ENCODE measurements at regions of chr18 and their contacts with region 1.

Region 1: GRCh38 chr18:34122724-34123334 is 101.9 kb downstream of the NOL4 start:
- DNase-seq: peak; percentile 21
- H3K4me3 Mint-ChIP-seq: no peak overlapping the region
- H3K27ac Mint-ChIP-seq: no peak overlapping the region
- H3K4me1 Mint-ChIP-seq: no peaks in the 10 kb centered on the region
- H3K27me3 Mint-ChIP-seq: no peaks in the 10 kb centered on the region

Region 2: GRCh38 chr18:33630476-33630875 is 492.4 kb before region 1 on chr18:
- CTCF ChIA-PET with region 1: no interaction called
- DNase-seq: no peak
- H3K4me3 Mint-ChIP-seq: no peak overlapping the region
- H3K27ac Mint-ChIP-seq: no peak overlapping the region
- H3K4me1 Mint-ChIP-seq: no peaks in the 10 kb centered on the region
- H3K27me3 Mint-ChIP-seq: no peaks in the 10 kb centered on the region

Region 3: GRCh38 chr18:33826151-33826550 is 296.7 kb before region 1 on chr18:
- CTCF ChIA-PET with region 1: no interaction called
- DNase-seq: no peak
- H3K4me3 Mint-ChIP-seq: no peak overlapping the region
- H3K27ac Mint-ChIP-seq: no peak overlapping the region
- H3K4me1 Mint-ChIP-seq: no peaks in the 10 kb centered on the region
- H3K27me3 Mint-ChIP-seq: no peaks in the 10 kb centered on the region

Region 4: DNA sequence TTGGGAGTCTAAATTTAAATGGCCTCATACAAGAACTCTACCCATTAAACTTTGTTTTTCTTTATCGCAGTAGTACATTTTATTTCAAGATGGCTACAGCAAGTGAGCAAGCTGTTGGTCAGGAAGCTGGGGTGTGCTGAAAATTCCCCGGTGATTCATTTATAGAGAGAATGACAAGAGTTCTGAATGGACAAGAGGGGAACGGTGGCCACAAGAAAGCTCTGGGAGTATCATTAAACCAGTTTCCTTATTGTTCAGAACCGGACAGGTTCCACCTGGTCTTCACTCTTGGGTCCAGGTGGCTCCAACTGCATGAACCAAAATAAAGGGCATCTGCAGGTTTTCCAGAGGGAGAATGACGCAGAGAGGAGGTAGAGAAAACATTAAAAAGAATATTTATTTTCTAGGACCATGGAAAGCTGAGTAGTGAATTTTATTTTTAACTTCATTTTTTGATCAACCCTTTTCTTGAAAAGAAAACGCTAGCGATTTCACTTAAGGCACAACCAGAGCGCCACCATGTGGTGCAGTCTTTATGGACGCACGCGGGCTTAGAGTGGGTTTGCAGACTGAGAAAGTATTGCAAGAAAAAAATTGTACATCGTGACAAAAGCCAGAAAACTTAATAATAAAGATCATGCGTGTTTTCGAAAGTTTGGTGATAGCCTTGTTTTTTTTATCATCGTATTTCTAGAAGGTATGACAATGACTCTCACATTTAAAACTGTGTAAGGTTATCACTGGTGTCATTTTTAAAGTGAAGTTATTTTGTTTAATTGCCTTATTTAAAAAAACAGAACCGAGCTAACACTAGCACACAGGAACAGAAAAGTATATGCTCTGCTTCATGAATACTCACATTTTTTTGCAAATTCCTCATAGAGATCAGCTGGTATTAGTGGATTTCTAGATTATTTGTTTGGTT is 199.8 kb after region 1 on chr18:
- CTCF ChIA-PET with region 1: interaction called, 11 read pairs
- DNase-seq: no peak
- H3K4me3 Mint-ChIP-seq: no peak overlapping the region
- H3K27ac Mint-ChIP-seq: no peak overlapping the region
- H3K4me1 Mint-ChIP-seq: no peaks in the 10 kb centered on the region
- H3K27me3 Mint-ChIP-seq: no peaks in the 10 kb centered on the region

Measured in activated naive CD4-positive, alpha-beta T cell treated with anti-CD3 and anti-CD28 coated beads, Interleukin-2, amount 10 ng/mL, durations not matched to agents 7 days and 5 days (primary cell).